ENCODE measurements at regions of chr4 and their contacts with region 1.

Region 1: DNA sequence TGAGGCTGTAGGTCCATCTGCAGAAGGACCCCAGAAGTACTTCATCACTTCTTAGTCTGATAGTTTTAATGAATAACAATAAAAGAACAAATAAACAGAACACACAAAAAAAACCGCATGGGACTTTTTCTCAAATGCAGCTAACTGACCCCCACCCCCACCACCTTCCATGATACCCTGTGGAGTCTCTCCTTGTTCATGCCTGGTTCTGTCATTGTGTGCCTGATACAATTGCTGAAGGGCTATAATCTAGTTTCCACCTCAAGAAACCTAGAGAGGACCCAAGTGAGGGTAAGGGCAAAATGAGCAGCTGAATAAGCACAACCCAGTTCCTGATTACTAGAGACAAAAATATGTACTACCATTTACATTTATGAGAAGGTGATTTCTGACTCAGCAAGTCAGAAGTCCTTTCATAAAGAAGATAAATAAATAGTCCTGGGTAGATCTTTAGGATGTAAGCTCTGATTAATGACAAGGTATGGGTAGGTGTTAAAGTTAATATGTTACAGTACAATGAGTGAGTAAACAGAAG is 155.1 kb downstream of the TMA16 start:
- DNase-seq: no peak
- H3K4me3 ChIP-seq: no peak overlapping the region
- H3K27ac ChIP-seq: no peak overlapping the region
- H3K27me3 ChIP-seq: no peaks in the 10 kb centered on the region
- CTCF ChIP-seq: no peak

Region 2: DNA sequence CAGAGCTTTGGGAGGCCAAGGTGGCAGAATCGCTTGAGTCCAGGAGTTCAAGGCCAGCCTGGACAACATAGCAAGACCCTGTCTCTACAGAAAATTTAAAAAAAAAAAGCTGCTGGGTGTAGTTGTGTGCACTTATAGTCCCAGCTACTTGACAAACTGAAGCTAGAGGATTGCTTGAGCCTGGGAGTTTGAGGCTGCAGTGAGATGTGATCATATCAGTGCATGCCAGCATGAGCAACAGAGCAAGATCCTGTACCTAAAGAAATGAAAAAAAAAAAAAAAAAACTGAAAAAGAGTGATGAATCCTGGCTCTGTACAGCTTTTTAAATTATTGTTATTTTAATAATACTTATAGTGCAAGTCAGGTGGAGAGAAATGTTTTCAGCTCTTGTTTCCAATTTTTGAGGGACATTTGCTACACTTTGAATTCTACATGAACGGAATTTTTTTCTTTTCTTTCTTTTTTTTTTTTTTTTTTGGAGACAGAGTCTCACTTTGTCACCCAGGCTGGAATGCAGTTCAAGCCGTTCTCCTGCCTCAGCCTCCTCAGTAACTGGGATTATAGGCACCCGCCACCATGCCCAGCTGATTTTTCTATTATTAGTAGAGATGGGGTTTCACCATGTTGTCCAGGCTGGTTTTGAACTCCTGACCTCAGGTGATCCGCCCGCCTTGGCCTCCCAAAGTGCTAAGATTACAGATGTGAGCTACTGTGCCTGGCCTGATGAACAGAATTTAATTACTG is 1701.4 kb before region 1 on chr4:
- CTCF ChIA-PET with region 1: interaction called, 10 read pairs
- POLR2A ChIA-PET with region 1: no interaction called
- DNase-seq: no peak
- H3K4me3 ChIP-seq: no peak overlapping the region
- H3K27ac ChIP-seq: no peak overlapping the region
- H3K27me3 ChIP-seq: no peaks in the 10 kb centered on the region
- CTCF ChIP-seq: no peak

Region 3: DNA sequence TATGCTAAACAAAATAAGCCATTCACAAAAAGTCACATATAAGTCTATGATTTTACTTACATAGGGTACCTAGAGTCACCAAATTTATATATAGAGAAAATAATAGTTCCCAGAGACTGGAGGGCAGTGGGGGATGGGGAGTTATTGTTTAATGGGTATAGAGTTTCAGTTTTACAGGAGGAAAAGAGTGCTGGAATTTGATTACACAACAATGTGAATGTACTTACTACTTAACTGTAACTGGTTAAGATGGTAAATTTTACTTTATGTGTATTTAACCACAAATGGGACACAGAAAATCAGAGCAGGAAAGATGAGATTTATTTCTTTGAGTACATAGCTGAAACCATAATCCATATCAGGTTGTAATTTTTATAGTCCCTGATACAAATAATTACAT is 10.7 kb before region 1 on chr4:
- CTCF ChIA-PET with region 1: no interaction called
- POLR2A ChIA-PET with region 1: no interaction called
- DNase-seq: no peak
- H3K4me3 ChIP-seq: no peak overlapping the region
- H3K27ac ChIP-seq: no peak overlapping the region
- H3K27me3 ChIP-seq: no peaks in the 10 kb centered on the region
- CTCF ChIP-seq: no peak

Measured in AG04450 (cell line).